Activated CD4-positive, alpha-beta T cell treated with anti-CD3 and anti-CD28 coated beads, Interleukin-2, amount 10 ng/mL, durations not matched to agents 24 days and 14 days (primary cell): ENCODE measurements at regions of chr16 and their contacts with region 1.

Region 1: GRCh38 chr16:67883872-67884261 is 818 bp upstream of the NRN1L start:
- DNase-seq: peak; percentile 92
- H3K4me3 Mint-ChIP-seq: no peak overlapping the region
- H3K27ac Mint-ChIP-seq: no peak overlapping the region
- H3K4me1 Mint-ChIP-seq: no peaks in the 10 kb centered on the region
- H3K27me3 Mint-ChIP-seq: no peaks in the 10 kb centered on the region

Region 2: DNA sequence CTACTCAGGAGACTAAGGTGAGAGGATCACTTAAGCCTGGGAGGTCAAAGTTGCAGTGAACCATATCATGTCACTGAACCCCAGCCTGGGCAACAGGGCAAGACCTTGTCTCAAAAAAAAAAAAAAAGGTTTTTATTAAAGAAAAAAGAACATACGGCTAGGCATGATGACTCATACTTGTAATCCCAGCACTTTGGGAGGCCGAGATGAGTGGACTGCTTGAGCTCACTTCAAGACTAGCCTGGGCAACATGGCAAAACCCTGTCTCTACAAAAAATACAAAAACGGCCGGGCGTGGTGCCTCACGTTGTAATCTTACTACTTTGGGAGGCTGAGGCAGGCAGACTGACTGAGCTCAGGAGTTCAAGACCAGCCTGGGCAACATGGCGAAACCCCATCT is 115.9 kb before region 1 on chr16:
- intact Hi-C with region 1: no loop called
- DNase-seq: no peak
- H3K4me3 Mint-ChIP-seq: no peak overlapping the region
- H3K27ac Mint-ChIP-seq: no peak overlapping the region
- H3K4me1 Mint-ChIP-seq: peaks cover 4% of the 10 kb centered on the region
- H3K27me3 Mint-ChIP-seq: no peaks in the 10 kb centered on the region

Region 3: GRCh38 chr16:67928561-67929364 is 44.9 kb after region 1 on chr16:
- intact Hi-C with region 1: loop called (anchors 1 kb)
- DNase-seq: peak; percentile 93
- H3K4me3 Mint-ChIP-seq: no peak overlapping the region
- H3K27ac Mint-ChIP-seq: peak overlapping the region; percentile 19
- H3K4me1 Mint-ChIP-seq: peaks cover 3% of the 10 kb centered on the region
- H3K27me3 Mint-ChIP-seq: no peaks in the 10 kb centered on the region